Ascending aorta (tissue), 2 donors: ENCODE measurements at regions of chr7 and their contacts with region 1.

Region 1: DNA sequence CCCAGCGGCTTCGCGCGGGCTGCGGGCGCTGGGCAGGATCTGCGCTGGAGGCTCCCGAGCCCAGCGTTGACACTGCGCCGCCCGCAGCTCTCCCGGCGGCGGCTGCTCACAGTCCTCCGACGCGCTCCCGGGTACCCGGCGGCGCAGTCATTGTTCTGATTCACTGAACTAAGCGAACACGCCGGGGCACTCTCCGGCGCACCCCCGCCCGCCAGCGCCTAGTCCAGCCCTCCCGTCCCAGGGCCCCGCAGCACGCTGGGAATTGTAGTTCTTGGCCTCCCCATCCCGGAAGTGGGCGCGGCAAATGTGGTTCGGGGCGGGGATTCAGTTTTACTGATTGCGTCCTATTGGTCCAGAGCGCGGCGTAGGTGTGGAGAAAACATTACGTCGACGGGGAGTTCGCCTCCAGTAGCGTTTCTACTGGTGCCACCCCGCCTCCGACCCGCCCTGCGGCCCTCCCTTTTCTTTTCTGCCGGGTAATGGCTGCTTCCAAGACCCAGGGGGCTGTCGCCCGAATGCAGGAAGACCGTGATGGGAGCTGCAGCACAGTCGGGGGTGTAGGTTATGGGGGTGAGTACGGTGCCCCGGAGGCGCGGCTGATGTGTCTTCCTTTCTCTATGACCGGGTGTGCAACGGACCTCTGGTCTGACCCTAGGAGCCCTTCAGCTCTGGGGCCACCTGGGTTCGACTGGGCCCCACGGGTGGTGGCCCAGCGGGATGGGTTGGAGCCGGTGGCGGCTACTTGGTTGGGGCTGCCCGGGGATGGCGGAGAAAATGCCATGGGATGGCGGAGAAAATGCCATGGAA is at the starts of genes DOCK4 and ZNF277:
- DNase-seq: peak; percentile 95 to 100
- H3K4me3 ChIP-seq: peak within 1 kb of the TSS; percentile 82
- H3K27ac ChIP-seq: peak within 1 kb of the TSS; percentile 82 to 84
- H3K4me1 ChIP-seq: peaks cover 0 to 7% of the 10 kb centered on the region in 2 donors
- H3K27me3 ChIP-seq: no peaks in the 10 kb centered on the region
- CTCF ChIP-seq: peak in 1 of 3 experiments; percentile 13
- total RNA-seq, gene DOCK4: 43.5 TPM
- total RNA-seq, gene ZNF277: 0.43 TPM

Region 2: DNA sequence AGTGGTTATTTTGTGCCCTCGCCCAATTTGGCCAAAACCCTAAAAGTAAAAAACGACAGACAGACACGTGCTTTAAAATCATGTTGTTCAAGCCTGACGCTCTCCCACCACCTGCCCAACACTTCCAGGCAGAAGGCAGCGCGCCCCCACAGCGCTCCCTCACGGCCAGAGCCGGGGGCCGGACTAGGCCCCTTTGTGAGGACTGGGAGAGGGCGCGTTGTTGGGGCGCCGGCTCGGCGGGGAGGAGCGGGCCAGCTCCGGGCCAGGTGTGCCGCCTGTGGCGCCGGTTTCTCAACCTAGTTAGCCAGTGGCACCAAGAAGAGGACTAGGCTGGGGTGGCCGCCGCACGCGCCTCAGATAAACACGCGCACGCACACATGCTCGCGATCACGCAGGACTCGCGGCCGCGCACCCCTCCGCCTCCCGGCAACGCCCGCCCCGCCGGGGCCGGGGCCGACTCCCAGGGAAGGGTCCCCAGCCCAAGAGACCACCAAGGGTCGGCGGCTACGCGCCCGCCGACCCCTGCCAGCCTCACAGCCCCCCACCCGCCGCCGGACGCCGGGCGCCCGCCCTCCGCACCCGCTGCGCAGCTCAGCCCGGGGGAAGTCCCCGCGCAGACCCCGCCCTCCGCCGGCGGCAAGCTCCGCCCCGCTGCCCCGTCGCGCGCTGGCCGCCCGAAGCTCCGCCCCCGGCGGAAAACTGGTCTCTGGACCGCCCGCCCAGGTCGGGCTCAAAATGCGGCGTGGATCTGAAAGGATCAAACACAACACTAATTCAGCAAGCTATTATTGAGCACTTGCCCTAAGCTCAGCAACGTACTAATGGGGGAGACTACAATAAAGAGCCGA is 644.3 kb before region 1 on chr7 and contains the start of gene IMMP2L:
- intact Hi-C with region 1: loop called (anchors 10 kb)
- DNase-seq: peak; percentile 53 to 91
- H3K4me3 ChIP-seq: peak within 1 kb of the TSS; percentile 81 to 88
- H3K27ac ChIP-seq: peak within 1 kb of the TSS; percentile 78 to 88
- H3K4me1 ChIP-seq: no peaks in the 10 kb centered on the region
- H3K27me3 ChIP-seq: no peaks in the 10 kb centered on the region
- CTCF ChIP-seq: peak in 2 of 3 experiments; percentile 29 to 61
- total RNA-seq, gene IMMP2L: 143 TPM

Region 3: GRCh38 chr7:112390167-112390566 is 183.7 kb after region 1 on chr7:
- intact Hi-C with region 1: loop called (anchors 5 kb)
- DNase-seq: no peak
- H3K4me3 ChIP-seq: no peak overlapping the region
- H3K27ac ChIP-seq: no peak overlapping the region
- H3K4me1 ChIP-seq: peaks cover 0 to 3% of the 10 kb centered on the region in 2 donors
- H3K27me3 ChIP-seq: no peaks in the 10 kb centered on the region
- CTCF ChIP-seq: no peak

Region 4: DNA sequence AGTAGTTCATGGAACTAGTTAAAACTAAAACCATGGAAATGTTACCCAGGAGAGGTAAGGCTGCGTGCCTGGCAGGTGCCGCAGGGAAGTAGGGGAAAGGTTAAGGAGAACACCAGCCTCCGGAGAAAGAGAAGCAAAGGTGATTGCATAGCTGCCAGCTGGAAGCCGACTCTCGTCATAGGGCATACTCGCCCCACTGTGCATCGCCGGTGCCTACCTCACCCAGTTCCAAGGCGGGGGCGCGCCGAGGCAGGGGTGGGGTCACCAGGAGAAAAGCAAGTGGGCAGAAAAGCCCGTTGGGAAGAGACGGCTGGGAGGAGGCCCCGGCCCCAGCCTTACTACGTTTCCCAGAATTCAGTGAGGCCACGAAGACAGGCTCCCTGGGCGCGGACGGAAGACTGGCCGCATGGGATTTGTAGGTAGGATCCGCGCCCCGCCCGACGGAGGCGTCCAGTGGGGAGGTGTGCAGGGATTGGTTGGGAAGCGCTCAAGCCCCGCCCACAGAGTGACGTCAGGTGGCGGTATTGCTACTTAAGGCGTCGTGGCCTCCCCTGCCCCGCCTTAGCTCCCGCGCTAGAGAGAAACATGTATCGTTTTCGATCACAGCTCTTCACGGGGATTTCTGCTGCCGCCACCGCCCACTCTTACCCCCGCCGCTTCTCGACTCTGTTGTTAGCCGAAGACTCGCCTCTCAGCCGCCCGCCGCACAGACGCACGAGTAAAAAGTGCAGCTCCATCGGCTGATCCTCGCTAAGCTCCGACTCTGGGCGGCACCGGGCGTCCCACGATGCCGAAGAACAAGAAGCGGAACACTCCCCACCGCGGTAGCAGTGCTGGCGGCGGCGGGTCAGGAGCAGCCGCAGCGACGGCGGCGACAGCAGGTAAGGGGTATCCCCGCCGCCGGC is 243.7 kb after region 1 on chr7 and contains the start of gene IFRD1:
- intact Hi-C with region 1: loop called (anchors 1 kb)
- DNase-seq: peak; percentile 95 to 100
- H3K4me3 ChIP-seq: peak within 1 kb of the TSS; percentile 78 to 96
- H3K27ac ChIP-seq: peak within 1 kb of the TSS; percentile 97 to 99
- H3K4me1 ChIP-seq: peaks cover 0 to 6% of the 10 kb centered on the region in 2 donors
- H3K27me3 ChIP-seq: no peaks in the 10 kb centered on the region
- CTCF ChIP-seq: no peak
- total RNA-seq, gene IFRD1: 35.1 TPM

Region 5: DNA sequence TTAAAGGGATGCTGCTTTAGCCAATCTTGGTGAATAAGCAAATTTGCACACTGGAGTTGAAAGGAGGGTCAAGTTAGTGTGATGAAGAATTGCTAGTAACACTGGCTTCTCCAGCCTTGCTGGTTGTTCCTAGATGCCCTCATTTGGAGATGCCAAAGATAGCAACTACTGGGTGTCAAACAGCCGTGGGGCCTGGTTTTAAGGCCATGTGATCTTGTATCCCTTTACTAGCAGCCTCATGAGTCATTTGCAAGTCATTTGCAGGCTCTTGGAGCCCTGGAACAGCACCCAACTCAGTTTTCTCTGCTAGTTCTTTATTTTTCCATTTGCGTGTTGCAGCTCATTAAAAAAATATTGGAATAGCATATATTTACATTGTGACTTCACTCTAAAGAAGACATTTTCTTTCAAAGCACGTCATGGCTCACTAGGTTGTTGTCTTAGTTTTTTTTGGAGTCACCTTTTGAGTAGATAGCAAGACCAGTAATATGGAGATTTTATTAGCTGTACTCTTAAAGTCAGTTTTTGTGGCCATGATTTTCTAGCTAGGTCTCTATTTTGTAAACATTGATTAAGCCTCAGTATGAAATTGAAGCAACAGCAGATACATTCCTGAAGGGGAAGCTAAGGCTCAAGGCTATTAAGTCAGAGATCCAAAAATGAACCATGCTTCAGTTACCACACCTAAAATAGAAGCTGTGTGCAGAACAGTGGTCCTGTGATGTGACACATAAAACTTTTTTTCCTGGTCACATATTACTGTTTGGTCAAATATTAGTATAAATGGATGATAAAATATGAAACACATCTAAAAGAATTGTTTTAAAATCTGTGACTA is 275.6 kb after region 1 on chr7:
- intact Hi-C with region 1: loop called (anchors 5 kb)
- DNase-seq: peak; percentile 77 to 94
- H3K4me3 ChIP-seq: no peak overlapping the region
- H3K27ac ChIP-seq: peak overlapping the region; percentile 81
- H3K4me1 ChIP-seq: peaks cover 4 to 35% of the 10 kb centered on the region in 2 donors
- H3K27me3 ChIP-seq: no peaks in the 10 kb centered on the region
- CTCF ChIP-seq: no peak

Region 6: GRCh38 chr7:112495810-112496462 is 289.5 kb after region 1 on chr7:
- intact Hi-C with region 1: loop called (anchors 5 kb)
- DNase-seq: peak in 1 of 2 donors; percentile 74
- H3K4me3 ChIP-seq: no peak overlapping the region
- H3K27ac ChIP-seq: no peak overlapping the region
- H3K4me1 ChIP-seq: no peaks in the 10 kb centered on the region
- H3K27me3 ChIP-seq: no peaks in the 10 kb centered on the region
- CTCF ChIP-seq: peak; percentile 63 to 79 (median 68)

Region 7: DNA sequence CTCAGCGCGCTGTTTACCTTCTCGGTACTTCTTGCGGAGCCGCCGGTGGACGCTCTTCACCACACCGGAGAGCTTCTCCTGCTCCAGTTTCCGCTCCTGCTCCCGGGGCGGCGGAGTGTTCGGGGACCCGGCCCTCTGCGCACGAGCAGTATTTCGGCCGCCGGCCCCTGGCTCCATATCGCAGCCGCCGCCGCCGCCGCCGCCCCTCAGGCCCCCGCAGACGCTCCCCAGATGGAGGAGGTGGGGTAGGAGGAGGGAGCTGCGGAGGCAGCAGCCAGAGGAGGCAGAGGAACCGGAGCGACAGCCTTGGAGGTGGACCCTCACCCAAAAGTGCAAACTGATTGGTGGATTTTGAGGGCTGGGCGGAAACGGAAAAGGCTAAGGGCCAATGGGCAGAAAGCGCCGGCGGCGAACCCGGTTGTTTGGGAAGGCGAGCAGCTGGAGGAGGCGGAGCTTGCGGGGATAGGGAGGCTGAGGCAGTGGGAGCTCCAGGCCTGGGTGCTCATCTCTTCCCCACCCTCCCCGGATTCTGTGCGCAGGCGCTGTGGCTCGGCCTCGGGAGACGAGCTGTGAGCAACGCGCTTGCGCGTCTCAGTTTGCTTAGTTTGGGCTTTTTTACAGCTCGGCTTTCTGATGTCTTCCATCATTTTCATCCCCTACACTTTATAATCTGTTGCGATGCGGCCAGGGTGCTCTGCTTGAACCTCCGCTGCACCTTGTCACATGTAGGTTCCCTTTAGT is 733.3 kb after region 1 on chr7:
- intact Hi-C with region 1: loop called (anchors 10 kb)
- DNase-seq: peak; percentile 98 to 100
- H3K4me3 ChIP-seq: peak overlapping the region; percentile 75 to 86
- H3K27ac ChIP-seq: peak overlapping the region; percentile 65 to 74
- H3K4me1 ChIP-seq: peaks cover 0 to 3% of the 10 kb centered on the region in 2 donors
- H3K27me3 ChIP-seq: no peaks in the 10 kb centered on the region
- CTCF ChIP-seq: no peak